GM12878 (cell line): ENCODE measurements at regions of chr12 and their contacts with region 1.

Region 1: GRCh38 chr12:90076851-90077319 is 368.2 kb upstream of the ATP2B1 start:
- DNase-seq: no peak
- ATAC-seq: no peak; the same call in 2 of the 3 replicates
- H3K4me3 ChIP-seq: no peak overlapping the region
- H3K27ac ChIP-seq: no peak overlapping the region
- H3K4me1 ChIP-seq: no peaks in the 10 kb centered on the region; the same call in 1 of the 2 replicates
- H3K27me3 ChIP-seq: no peaks in the 10 kb centered on the region
- CTCF ChIP-seq: no peak
- EP300 ChIP-seq: no peak
- POLR2A ChIP-seq: no peak
- RAD21 ChIP-seq: no peak

Region 2: GRCh38 chr12:89386138-89386537 is 690.7 kb before region 1 on chr12:
- CTCF ChIA-PET with region 1: no interaction called
- POLR2A ChIA-PET with region 1: no interaction called
- RAD21 ChIA-PET with region 1: no interaction called
- SMC1A ChIA-PET with region 1: no interaction called
- in situ Hi-C with region 1: no loop called
- intact Hi-C with region 1: no loop called
- DNase-seq: no peak
- ATAC-seq: no peak
- H3K4me3 ChIP-seq: no peak overlapping the region
- H3K27ac ChIP-seq: no peak overlapping the region
- H3K4me1 ChIP-seq: no peaks in the 10 kb centered on the region
- H3K27me3 ChIP-seq: no peaks in the 10 kb centered on the region
- CTCF ChIP-seq: no peak
- EP300 ChIP-seq: no peak
- POLR2A ChIP-seq: no peak
- RAD21 ChIP-seq: no peak

Region 3: GRCh38 chr12:90064852-90065801 is 11.8 kb before region 1 on chr12:
- CTCF ChIA-PET with region 1: no interaction called
- POLR2A ChIA-PET with region 1: no interaction called
- RAD21 ChIA-PET with region 1: no interaction called
- SMC1A ChIA-PET with region 1: interaction called, 16 read pairs
- in situ Hi-C with region 1: no loop called
- intact Hi-C with region 1: no loop called
- DNase-seq: no peak
- ATAC-seq: peak; percentile 71
- H3K4me3 ChIP-seq: no peak overlapping the region
- H3K27ac ChIP-seq: no peak overlapping the region
- H3K4me1 ChIP-seq: no peaks in the 10 kb centered on the region
- H3K27me3 ChIP-seq: no peaks in the 10 kb centered on the region
- CTCF ChIP-seq: no peak
- EP300 ChIP-seq: no peak
- POLR2A ChIP-seq: no peak
- RAD21 ChIP-seq: no peak